Mammary epithelial cell (primary cell): ENCODE measurements at regions of chr16 and their contacts with region 1.

Region 1: DNA sequence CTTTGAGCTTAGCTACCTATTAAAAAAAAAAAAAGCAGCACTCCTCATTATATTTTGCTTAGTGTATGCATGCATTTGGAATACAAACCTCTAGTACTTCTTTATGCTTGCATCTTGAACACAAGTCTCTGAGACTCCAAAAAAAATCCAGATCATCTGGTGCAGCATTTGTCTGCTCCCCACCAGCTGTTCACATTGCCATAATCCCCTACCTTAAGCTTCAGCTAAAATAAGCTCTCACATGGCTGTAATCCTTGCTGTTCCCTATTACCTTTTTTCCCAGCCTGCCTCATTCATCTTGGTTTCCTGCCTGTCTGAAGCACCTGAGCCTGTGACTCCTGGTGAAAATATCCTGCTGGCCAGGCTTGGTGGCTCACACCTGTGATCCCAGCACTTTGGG is 7.5 kb upstream of the NFATC2IP start:
- DNase-seq: no peak
- H3K4me3 ChIP-seq: no peak overlapping the region
- H3K27ac ChIP-seq: no peak overlapping the region
- H3K4me1 ChIP-seq: peaks cover 13% of the 10 kb centered on the region
- H3K27me3 ChIP-seq: no peaks in the 10 kb centered on the region
- CTCF ChIP-seq: no peak

Region 2: DNA sequence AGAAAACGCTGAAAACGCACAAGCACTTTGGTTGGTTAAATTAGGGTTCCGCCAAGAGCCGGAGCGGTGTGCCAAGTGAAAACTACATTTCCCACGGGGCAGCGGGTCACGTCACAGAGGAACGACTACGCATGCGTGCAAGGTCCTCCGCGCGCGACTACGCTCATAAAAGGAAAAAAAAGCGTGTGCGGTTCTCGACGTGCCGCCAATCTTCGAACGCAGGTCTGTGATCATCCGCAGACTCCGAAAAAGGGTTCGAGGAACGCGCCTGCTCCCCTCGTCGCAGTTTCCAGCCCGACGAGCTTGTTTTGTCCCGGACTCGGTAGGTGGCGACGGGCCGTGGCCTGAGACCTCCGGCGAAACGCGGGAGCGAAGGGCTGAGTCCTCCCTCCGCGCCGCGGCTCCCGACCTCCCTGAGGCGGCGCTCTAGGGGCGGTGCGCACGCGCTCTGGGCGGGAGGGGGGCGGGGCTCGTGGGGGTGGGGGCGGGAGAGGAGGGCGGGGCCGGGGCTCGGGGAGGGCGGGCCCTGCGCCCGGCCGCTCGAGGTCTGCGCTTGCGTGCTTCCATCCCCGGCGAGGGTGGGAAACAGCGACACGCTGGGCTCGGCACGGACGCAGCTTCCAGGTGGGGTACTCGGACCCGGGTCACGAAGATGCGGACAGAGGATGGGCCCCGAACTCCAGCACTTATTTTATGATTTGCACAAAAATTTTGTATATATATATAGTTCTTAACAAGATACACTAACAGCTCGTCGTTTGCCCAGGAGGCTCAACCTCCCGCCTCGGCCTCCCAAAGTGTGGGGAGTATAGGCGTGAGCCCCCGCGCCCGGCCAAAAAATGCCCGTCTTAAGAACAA is 389.3 kb before region 1 on chr16 and contains the start of gene SGF29:
- CTCF ChIA-PET with region 1: no interaction called
- dilution Hi-C with region 1: no loop called
- in situ Hi-C with region 1: loop called (anchors 10 kb)
- intact Hi-C with region 1: loop called (anchors 1 kb)
- DNase-seq: peak; percentile 86
- H3K4me3 ChIP-seq: peak within 1 kb of the TSS; percentile 45 to 91 (median 69)
- H3K27ac ChIP-seq: peak within 1 kb of the TSS; percentile 66
- H3K4me1 ChIP-seq: peaks cover 7% of the 10 kb centered on the region
- H3K27me3 ChIP-seq: no peaks in the 10 kb centered on the region
- CTCF ChIP-seq: peak in 1 of 2 donors; percentile 33
- total RNA-seq, gene SGF29: 12.7 to 17.7 TPM

Region 3: DNA sequence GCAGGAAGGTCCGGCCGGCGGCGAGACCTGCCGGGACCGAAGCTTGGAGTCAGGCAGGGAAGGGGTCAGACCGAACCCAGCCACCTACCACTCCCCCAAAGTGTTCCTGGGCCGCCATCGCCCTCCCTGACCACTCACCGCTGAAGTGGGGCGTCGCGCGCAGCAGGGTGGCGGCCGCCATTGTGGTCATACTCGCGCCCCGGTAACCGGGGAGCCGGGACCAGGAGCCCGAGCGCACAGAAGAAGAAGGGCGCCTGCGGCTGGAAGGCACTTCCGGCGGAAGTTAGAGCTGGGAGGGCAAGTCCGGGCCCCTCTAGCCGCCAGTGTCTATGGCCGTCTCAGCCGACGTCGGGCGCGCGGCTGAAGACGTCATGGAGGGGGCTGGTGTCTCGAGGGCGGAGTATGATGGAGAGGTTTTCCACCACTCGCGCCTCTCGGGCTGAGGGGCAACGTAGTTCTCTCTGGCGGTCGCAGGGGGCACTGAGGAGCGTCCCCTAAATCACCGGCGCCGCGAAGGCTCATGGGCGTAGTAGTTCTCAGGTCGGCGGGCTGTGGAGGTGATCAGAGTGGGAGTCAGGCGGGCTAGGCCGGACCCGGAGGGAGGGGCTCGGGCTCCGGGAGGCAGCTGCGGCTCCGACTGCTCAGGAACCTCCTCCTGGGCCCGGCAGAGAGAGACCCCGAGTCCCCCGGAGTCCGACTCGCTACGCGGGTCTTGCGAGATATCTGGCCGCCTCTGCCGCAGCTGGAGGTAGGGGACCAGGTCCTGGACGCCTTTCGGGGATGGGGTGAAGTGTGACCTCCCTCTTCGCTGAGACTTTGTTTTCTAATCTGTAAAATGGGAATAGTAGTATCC is 97.0 kb before region 1 on chr16 and contains the start of gene TUFM:
- CTCF ChIA-PET with region 1: no interaction called
- dilution Hi-C with region 1: no loop called
- in situ Hi-C with region 1: loop called in 1 of 2 experiments (anchors 10 kb)
- intact Hi-C with region 1: loop called (anchors 2 kb)
- DNase-seq: peak; percentile 98
- H3K4me3 ChIP-seq: peak within 1 kb of the TSS; percentile 69 to 92 (median 89)
- H3K27ac ChIP-seq: peak within 1 kb of the TSS; percentile 59
- H3K4me1 ChIP-seq: peaks cover 9% of the 10 kb centered on the region
- H3K27me3 ChIP-seq: no peaks in the 10 kb centered on the region
- CTCF ChIP-seq: peak; percentile 50 to 59
- total RNA-seq, gene TUFM: 94.9 to 142 TPM

Region 4: DNA sequence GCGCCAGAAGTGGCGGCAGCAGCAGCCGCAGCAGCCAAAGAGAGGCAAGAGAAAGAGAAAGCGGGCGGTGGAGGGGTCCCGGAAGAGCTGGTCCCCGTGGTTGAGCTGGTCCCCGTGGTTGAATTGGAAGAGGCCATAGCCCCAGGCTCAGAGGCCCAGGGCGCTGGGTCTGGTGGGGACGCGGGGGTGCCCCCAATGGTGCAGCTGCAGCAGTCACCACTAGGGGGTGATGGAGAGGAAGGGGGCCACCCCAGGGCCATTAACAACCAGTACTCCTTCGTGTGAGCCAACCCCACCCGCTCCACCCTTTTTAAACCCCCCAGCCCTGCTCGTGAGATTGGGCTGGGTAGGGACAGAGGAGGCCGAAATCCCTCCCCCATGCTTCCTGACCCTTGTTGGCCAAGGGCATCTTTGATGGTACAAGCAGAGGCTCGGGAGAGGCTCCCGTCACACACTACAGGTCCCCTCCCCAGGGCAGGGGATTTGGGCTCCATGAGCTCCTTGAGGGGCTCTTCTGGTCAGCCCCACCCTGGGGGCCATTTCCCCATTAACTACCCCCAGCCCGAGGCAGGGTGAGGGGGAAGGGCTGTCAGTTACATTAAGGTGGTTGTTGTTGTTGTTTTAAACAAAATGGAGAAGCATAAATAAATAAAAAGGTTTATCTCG is 69.6 kb before region 1 on chr16:
- CTCF ChIA-PET with region 1: no interaction called
- dilution Hi-C with region 1: no loop called
- in situ Hi-C with region 1: no loop called
- intact Hi-C with region 1: loop called (anchors 1 kb)
- DNase-seq: no peak
- H3K4me3 ChIP-seq: no peak overlapping the region
- H3K27ac ChIP-seq: no peak overlapping the region
- H3K4me1 ChIP-seq: no peaks in the 10 kb centered on the region
- H3K27me3 ChIP-seq: no peaks in the 10 kb centered on the region
- CTCF ChIP-seq: peak; percentile 69 to 76

Region 5: GRCh38 chr16:28924732-28925385 is 18.4 kb before region 1 on chr16 and contains the start of gene RABEP2:
- CTCF ChIA-PET with region 1: no interaction called
- dilution Hi-C with region 1: no loop called
- in situ Hi-C with region 1: no loop called
- intact Hi-C with region 1: loop called (anchors 2 kb)
- DNase-seq: peak; percentile 97
- H3K4me3 ChIP-seq: peak within 1 kb of the TSS; percentile 57 to 95 (median 83)
- H3K27ac ChIP-seq: peak within 1 kb of the TSS; percentile 73
- H3K4me1 ChIP-seq: peaks cover 11% of the 10 kb centered on the region
- H3K27me3 ChIP-seq: no peaks in the 10 kb centered on the region
- CTCF ChIP-seq: no peak
- total RNA-seq, gene RABEP2: 24.2 to 25.4 TPM

Region 6: DNA sequence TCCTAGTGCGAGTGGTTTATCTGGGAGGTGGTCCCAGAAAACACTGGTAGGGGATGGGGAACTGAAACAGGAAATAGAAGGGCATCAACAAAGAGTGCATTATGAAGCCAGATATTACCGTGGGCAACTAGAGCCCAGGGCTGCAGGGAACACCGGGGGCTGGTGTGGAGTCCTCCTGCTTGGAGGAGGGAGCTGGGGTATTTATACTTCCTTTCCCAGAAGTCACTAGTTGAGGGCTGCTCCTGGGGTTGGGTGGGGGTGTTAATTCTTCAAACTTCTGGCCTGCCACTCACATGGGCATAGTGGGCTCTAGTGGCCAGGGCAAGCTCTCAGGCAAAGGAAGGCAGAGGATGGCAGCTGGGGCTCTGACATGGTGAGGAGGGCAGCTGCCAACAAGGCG is 56.3 kb after region 1 on chr16:
- CTCF ChIA-PET with region 1: no interaction called
- dilution Hi-C with region 1: no loop called
- in situ Hi-C with region 1: no loop called
- intact Hi-C with region 1: no loop called
- DNase-seq: no peak
- H3K4me3 ChIP-seq: no peak overlapping the region
- H3K27ac ChIP-seq: no peak overlapping the region
- H3K4me1 ChIP-seq: no peaks in the 10 kb centered on the region
- H3K27me3 ChIP-seq: no peaks in the 10 kb centered on the region
- CTCF ChIP-seq: no peak